MCF 10A (cell line): ENCODE measurements at regions of chr9 and their contacts with region 1.

Region 1: DNA sequence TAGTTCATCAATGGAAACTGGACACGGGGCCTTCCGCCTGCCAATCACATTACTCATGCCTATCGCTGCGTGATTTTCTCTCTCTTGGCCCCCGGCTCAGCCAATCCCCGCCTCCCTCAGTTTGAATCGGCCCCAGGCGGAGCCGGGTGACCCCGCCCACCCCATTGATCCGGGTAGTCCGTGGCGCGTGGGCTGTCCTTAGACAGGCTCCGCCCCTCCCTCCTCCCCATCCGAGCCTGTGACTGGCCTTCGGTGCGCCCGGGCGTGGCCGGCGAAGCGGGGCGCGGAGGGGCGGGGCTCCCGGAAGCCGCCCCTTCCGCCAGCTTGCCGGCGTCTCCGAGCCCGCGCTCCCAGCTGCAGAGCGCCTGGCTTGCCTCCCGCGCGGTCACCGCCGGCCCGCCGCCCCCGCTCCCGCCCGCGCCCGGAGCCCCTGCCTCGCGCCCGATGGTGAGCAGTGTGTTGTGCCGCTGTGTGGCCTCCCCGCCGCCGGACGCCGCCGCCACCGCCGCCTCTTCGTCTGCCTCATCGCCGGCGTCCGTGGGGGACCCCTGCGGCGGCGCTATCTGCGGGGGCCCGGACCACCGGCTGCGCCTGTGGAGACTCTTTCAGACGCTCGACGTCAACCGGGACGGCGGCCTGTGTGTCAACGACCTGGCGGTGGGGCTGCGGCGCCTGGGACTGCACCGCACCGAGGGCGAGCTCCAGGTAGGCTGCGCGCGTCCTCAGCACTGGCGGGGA is at the start of gene SLC25A25:
- DNase-seq: peak; percentile 99
- H3K4me3 Mint-ChIP-seq: no peak within 1 kb of the TSS
- H3K27ac Mint-ChIP-seq: peak within 1 kb of the TSS; percentile 77
- H3K4me1 Mint-ChIP-seq: peaks cover 30% of the 10 kb centered on the region
- H3K27me3 Mint-ChIP-seq: no peaks in the 10 kb centered on the region
- CTCF ChIP-seq: no peak
- total RNA-seq, gene SLC25A25: 11.1 and 15.5 TPM in 2 replicates

Region 2: DNA sequence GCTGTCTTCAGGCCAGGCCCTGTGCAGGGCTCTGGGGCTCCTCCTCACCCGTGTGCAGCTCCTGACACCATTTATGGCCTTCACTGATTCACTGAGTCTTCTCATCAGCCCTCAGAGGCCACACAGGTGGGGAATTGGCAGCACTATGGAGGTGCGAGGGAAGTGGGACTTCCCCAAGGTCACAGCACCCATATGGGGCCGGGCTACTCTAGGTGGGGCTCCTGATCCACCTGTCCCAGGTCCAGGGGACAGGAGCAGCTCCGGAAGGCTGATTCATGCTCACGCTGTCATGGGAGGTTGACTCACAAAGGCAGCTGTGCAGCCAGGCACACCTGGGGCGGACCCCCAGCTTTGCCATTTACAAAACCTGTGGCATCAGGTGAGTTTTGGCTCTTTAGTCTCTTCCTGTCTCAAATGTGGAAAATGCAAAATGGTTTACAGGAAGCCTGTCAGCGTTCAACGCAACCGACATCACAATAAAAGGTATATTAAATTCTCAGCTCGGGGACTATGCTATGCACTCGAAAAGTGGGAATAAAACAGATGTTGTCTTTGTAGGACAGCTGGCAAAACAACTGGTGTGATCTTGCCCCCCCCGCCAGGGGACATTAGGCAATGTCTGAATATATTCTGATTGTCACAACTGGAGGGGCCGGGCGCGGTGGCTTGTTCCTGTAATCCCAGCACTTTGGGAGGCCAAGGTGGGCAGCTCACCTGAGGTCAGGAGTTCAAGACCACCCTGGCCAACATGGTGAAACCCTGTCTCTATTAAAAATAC is 15.9 kb before region 1 on chr9:
- CTCF ChIA-PET with region 1: interaction called, 5 read pairs
- POLR2A ChIA-PET with region 1: interaction called, 16 read pairs
- intact Hi-C with region 1: no loop called
- DNase-seq: peak; percentile 54
- H3K4me3 Mint-ChIP-seq: no peak overlapping the region
- H3K27ac Mint-ChIP-seq: no peak overlapping the region
- H3K4me1 Mint-ChIP-seq: peaks cover 9% of the 10 kb centered on the region
- H3K27me3 Mint-ChIP-seq: no peaks in the 10 kb centered on the region
- CTCF ChIP-seq: no peak

Region 3: GRCh38 chr9:128081056-128081455 is 13.0 kb after region 1 on chr9:
- CTCF ChIA-PET with region 1: interaction called, 5 read pairs
- POLR2A ChIA-PET with region 1: interaction called, 11 read pairs
- intact Hi-C with region 1: no loop called
- DNase-seq: no peak
- H3K4me3 Mint-ChIP-seq: no peak overlapping the region
- H3K27ac Mint-ChIP-seq: no peak overlapping the region
- H3K4me1 Mint-ChIP-seq: peaks cover 26% of the 10 kb centered on the region
- H3K27me3 Mint-ChIP-seq: no peaks in the 10 kb centered on the region
- CTCF ChIP-seq: no peak

Region 4: GRCh38 chr9:128094166-128094967 is 26.3 kb after region 1 on chr9:
- CTCF ChIA-PET with region 1: interaction called, 3 read pairs
- POLR2A ChIA-PET with region 1: interaction called, 56 read pairs
- intact Hi-C with region 1: no loop called
- DNase-seq: peak; percentile 99
- H3K4me3 Mint-ChIP-seq: peak overlapping the region; percentile 66
- H3K27ac Mint-ChIP-seq: peak overlapping the region; percentile 99
- H3K4me1 Mint-ChIP-seq: peaks cover 21% of the 10 kb centered on the region
- H3K27me3 Mint-ChIP-seq: no peaks in the 10 kb centered on the region
- CTCF ChIP-seq: no peak